Tibial artery (tissue), 4 donors: ENCODE measurements at regions of chr17 and their contacts with region 1.

Region 1: GRCh38 chr17:43576563-43577229 is 30.6 kb upstream of the ETV4 start:
- DNase-seq: peak; percentile 45 to 73
- H3K4me3 ChIP-seq: no peak overlapping the region
- H3K27ac ChIP-seq: no peak overlapping the region
- H3K4me1 ChIP-seq: peaks cover 0 to 32% (median 18%) of the 10 kb centered on the region in 4 donors
- H3K27me3 ChIP-seq: no peaks in the 10 kb centered on the region
- CTCF ChIP-seq: peak; percentile 93

Region 2: GRCh38 chr17:43628089-43628650 is 51.5 kb after region 1 on chr17:
- intact Hi-C with region 1: no loop called
- DNase-seq: no peak
- H3K4me3 ChIP-seq: no peak overlapping the region
- H3K27ac ChIP-seq: no peak overlapping the region
- H3K4me1 ChIP-seq: no peaks in the 10 kb centered on the region
- H3K27me3 ChIP-seq: peaks cover 0 to 13% of the 10 kb centered on the region in 2 donors
- CTCF ChIP-seq: no peak

Region 3: GRCh38 chr17:43673516-43674323 is 97.0 kb after region 1 on chr17:
- intact Hi-C with region 1: loop called (anchors 1 kb)
- DNase-seq: peak; percentile 71 to 84
- H3K4me3 ChIP-seq: no peak overlapping the region
- H3K27ac ChIP-seq: no peak overlapping the region
- H3K4me1 ChIP-seq: peaks cover 0 to 19% (median 13%) of the 10 kb centered on the region in 4 donors
- H3K27me3 ChIP-seq: no peaks in the 10 kb centered on the region
- CTCF ChIP-seq: peak; percentile 93 to 96

Region 4: DNA sequence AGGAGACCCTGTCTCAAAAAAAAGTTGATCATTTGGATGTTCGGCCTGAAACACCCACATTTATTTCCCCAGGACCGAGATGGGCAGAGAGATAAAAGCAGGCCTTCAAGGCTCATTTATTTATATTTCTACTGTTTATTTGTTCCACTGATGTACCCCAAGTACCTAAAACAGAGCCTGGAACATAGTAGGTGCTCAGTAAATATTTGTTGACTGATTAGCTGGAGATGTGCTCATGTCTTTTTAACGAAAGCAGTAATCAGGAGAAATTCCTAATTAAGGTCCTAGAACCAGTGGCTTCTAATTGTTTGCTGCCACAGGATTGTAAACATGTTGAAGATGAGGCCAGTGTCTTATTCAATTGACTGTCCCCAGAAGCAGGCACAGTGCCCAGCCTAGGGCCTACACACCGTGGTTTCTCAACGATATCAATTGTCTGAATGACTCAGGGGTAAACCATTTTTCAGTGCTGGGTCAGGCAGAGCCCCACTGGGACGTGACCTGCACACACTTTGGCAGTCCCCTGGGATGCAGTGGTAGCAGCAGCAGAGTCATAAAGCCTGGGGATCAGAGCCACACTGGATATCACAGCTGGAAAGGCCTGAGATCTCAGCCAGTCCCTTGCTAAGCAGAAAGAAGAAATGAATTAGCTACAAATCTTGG is 147.1 kb after region 1 on chr17:
- intact Hi-C with region 1: no loop called
- DNase-seq: peak; percentile 38 to 83
- H3K4me3 ChIP-seq: no peak overlapping the region
- H3K27ac ChIP-seq: peak overlapping the region in 1 of 2 donors; percentile 40
- H3K4me1 ChIP-seq: peaks cover 0 to 19% (median 5%) of the 10 kb centered on the region in 4 donors
- H3K27me3 ChIP-seq: no peaks in the 10 kb centered on the region
- CTCF ChIP-seq: no peak

Region 5: DNA sequence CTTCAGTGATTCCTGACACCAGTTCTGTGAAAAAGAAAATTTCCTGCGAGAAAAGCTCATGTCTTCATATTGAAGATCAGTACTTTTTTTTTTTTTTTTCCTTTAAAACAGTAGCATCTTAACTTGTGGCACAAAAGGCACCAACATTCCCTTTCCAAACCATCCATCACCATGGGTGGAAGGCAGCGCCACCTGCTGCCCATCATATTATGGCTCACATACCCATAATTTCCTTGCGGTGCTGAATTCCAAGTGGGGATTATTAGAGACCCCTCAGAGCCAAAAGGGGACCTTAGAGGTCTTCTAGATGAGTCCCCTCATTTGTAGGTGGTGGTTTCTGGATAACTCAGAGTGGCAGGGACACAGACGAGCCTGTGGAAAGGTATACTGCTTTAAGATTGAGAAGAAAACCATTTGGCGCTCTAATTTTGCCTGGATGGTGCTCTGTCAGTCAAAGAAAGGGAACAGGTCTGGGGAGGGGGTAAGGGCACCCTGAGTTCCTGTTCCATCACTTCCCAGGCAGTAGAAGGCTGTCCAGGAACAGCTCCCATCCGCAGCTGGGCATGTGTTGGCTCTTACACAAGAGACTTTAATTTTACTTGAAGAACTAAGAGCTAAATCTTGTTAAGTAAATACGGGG is 189.8 kb after region 1 on chr17:
- intact Hi-C with region 1: loop called (anchors 5 kb)
- DNase-seq: peak; percentile 51 to 77
- H3K4me3 ChIP-seq: no peak overlapping the region
- H3K27ac ChIP-seq: peak overlapping the region in 1 of 2 donors; percentile 8
- H3K4me1 ChIP-seq: peaks cover 0 to 11% (median 1%) of the 10 kb centered on the region in 4 donors
- H3K27me3 ChIP-seq: no peaks in the 10 kb centered on the region
- CTCF ChIP-seq: peak; percentile 66 to 85